Lower lobe of right lung (tissue), 2 donors: ENCODE measurements at regions of chr11 and their contacts with region 1.

Region 1: GRCh38 chr11:69848201-69848600 is 29.0 kb upstream of the FGF3 start:
- DNase-seq: peak; percentile 2
- ATAC-seq: no peak
- H3K4me3 ChIP-seq: no peak overlapping the region
- H3K27ac ChIP-seq: no peak overlapping the region
- H3K4me1 ChIP-seq: no peaks in the 10 kb centered on the region
- H3K27me3 ChIP-seq: peaks cover 10% of the 10 kb centered on the region
- CTCF ChIP-seq: no peak

Region 2: GRCh38 chr11:69985641-69986439 is 137.6 kb after region 1 on chr11:
- intact Hi-C with region 1: no loop called
- DNase-seq: no peak
- ATAC-seq: peak in 1 of 2 donors; percentile 11
- H3K4me3 ChIP-seq: peak overlapping the region; percentile 52
- H3K27ac ChIP-seq: peak overlapping the region; percentile 64
- H3K4me1 ChIP-seq: peaks cover 16% of the 10 kb centered on the region
- H3K27me3 ChIP-seq: peaks cover 65% of the 10 kb centered on the region
- CTCF ChIP-seq: no peak

Region 3: DNA sequence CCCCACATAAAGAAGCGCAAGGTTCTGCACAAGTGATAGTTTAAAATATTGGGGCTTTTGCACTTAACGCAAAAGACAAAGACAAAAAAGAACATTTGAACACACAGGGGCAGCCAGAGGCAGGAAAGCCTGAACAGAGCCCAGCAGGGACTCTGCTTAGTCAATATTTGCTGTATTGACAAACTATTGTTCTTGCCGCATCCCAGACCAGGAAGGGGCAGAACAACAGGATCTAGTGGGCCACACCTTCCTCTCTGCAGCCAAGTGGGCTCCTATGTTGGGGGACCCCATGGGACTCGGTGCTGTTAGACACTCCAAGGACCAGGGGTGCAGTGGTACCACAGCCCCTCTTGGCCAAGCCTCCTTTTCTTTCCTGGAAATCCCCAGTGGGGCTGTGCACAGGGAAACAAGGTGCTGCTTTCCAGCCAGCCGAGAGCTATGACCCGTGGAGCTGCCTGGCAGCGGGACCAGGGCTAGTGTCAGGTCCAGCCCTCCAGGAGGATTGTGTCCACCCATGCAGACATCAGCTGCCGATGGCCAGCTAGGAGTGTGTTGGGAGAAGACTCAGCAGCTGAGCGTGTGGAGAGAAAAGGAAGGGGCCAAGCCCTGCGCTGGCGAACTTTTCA is 186.7 kb after region 1 on chr11:
- intact Hi-C with region 1: loop called (anchors 5 kb)
- DNase-seq: no peak
- ATAC-seq: no peak
- H3K4me3 ChIP-seq: no peak overlapping the region
- H3K27ac ChIP-seq: no peak overlapping the region
- H3K4me1 ChIP-seq: no peaks in the 10 kb centered on the region
- H3K27me3 ChIP-seq: no peaks in the 10 kb centered on the region
- CTCF ChIP-seq: no peak